Common myeloid progenitor, CD34-positive (primary cell): ENCODE measurements at regions of chr13 and their contacts with region 1.

Region 1: GRCh38 chr13:45047394-45048310 is 58.3 kb downstream of the GPALPP1 start:
- DNase-seq: peak; percentile 79 to 91 (median 86)
- H3K4me3 ChIP-seq: peak overlapping the region in 6 of 7 experiments; percentile 63 to 89 (median 72)
- H3K27ac ChIP-seq: no peak overlapping the region
- H3K4me1 ChIP-seq: peaks cover 0 to 4% (median 1%) of the 10 kb centered on the region in 4 experiments
- H3K27me3 ChIP-seq: no peaks in the 10 kb centered on the region

Region 2: GRCh38 chr13:45036206-45036605 is 11.4 kb before region 1 on chr13:
- CTCF ChIA-PET with region 1: interaction called, 13 read pairs
- POLR2A ChIA-PET with region 1: no interaction called
- DNase-seq: no peak
- H3K4me3 ChIP-seq: no peak overlapping the region
- H3K27ac ChIP-seq: no peak overlapping the region
- H3K4me1 ChIP-seq: no peaks in the 10 kb centered on the region
- H3K27me3 ChIP-seq: no peaks in the 10 kb centered on the region

Region 3: DNA sequence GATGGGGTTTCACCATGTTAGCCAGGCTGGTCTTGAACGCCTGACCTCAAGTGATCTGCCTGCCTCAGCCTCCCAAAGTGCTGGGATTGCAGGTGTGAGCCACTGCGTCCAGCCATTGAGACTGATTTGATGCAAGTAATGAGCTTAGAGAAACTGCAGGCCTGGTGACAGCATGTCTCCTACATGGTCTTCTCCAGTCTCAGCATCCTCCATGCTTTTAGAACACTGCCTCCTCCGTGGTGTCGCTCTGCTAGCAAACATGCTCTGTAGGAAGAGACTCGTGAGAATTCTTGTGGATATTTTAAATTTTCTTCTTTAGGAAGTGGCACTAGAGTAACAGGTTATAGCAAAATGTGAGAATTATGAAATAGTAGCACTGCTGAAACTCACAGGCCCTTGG is 256.2 kb after region 1 on chr13:
- CTCF ChIA-PET with region 1: interaction called, 24 read pairs
- POLR2A ChIA-PET with region 1: no interaction called
- DNase-seq: no peak
- H3K4me3 ChIP-seq: no peak overlapping the region
- H3K27ac ChIP-seq: no peak overlapping the region
- H3K4me1 ChIP-seq: no peaks in the 10 kb centered on the region
- H3K27me3 ChIP-seq: peaks cover 0 to 6% (median 5%) of the 10 kb centered on the region in 5 experiments